ENCODE measurements at regions of chr16 and their contacts with region 1.

Region 1: DNA sequence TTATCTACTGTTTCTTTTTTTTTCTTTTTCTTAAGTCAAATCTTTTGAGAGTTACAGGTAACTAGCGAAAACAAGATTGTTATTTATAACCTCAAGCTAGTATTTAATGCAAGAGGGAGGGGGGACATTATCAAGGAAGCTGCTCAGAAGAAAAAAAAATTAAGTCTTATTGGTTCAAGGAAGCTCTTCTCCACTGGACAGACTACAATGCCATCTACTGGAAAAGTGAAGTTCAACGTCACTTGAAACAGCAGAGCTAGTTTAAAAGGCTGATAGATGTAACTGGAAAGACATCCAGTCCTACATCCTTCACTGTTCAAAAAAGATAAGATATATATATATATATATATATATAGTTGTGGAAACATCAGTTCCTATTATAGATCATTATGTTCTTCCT is 418.0 kb upstream of the PSMD7 start:
- DNase-seq: no peak
- H3K4me3 ChIP-seq: no peak overlapping the region
- H3K27ac ChIP-seq: no peak overlapping the region
- H3K4me1 ChIP-seq: peaks cover 0 to 4% (median 1%) of the 10 kb centered on the region in 4 experiments; a peak in 3 of 7 replicates
- H3K27me3 ChIP-seq: no peaks in the 10 kb centered on the region
- CTCF ChIP-seq: peak in 2 of 3 experiments; percentile 31 to 56; a peak in 2 of 4 replicates
- EP300 ChIP-seq: no peak
- POLR2A ChIP-seq: no peak
- RAD21 ChIP-seq: peak; percentile 82 to 87

Region 2: GRCh38 chr16:73565262-73565661 is 313.3 kb before region 1 on chr16:
- CTCF ChIA-PET with region 1: interaction called, 19 read pairs
- POLR2A ChIA-PET with region 1: no interaction called
- DNase-seq: no peak
- H3K4me3 ChIP-seq: no peak overlapping the region
- H3K27ac ChIP-seq: no peak overlapping the region
- H3K4me1 ChIP-seq: peaks cover 0 to 8% (median under 1%) of the 10 kb centered on the region in 4 experiments; a peak in 2 of 7 replicates
- H3K27me3 ChIP-seq: no peaks in the 10 kb centered on the region; a peak in 1 of 7 replicates
- CTCF ChIP-seq: peak in 2 of 3 experiments; percentile 42 to 45; a peak in 2 of 4 replicates
- EP300 ChIP-seq: no peak
- POLR2A ChIP-seq: no peak
- RAD21 ChIP-seq: peak; percentile 76 to 84

Region 3: GRCh38 chr16:73891129-73891542 is 12.5 kb after region 1 on chr16:
- CTCF ChIA-PET with region 1: interaction called, 7 read pairs
- POLR2A ChIA-PET with region 1: interaction called, 11 read pairs
- DNase-seq: peak; percentile 15 to 49
- H3K4me3 ChIP-seq: peak overlapping the region; percentile 32 to 61 (median 40); a peak in 6 of 8 replicates
- H3K27ac ChIP-seq: no peak overlapping the region
- H3K4me1 ChIP-seq: peaks cover 0 to 12% (median 5%) of the 10 kb centered on the region in 4 experiments; a peak in 4 of 7 replicates
- H3K27me3 ChIP-seq: no peaks in the 10 kb centered on the region
- CTCF ChIP-seq: no peak
- EP300 ChIP-seq: no peak
- POLR2A ChIP-seq: no peak
- RAD21 ChIP-seq: no peak

Region 4: GRCh38 chr16:73945631-73946030 is 67.0 kb after region 1 on chr16:
- CTCF ChIA-PET with region 1: no interaction called
- POLR2A ChIA-PET with region 1: no interaction called
- DNase-seq: no peak
- H3K4me3 ChIP-seq: no peak overlapping the region
- H3K27ac ChIP-seq: no peak overlapping the region
- H3K4me1 ChIP-seq: no peaks in the 10 kb centered on the region
- H3K27me3 ChIP-seq: no peaks in the 10 kb centered on the region
- CTCF ChIP-seq: no peak
- EP300 ChIP-seq: no peak
- POLR2A ChIP-seq: no peak
- RAD21 ChIP-seq: no peak

Measured in H1 (cell line).